Esophagus muscularis mucosa (tissue), 4 donors: ENCODE measurements at regions of chr6 and their contacts with region 1.

Region 1: DNA sequence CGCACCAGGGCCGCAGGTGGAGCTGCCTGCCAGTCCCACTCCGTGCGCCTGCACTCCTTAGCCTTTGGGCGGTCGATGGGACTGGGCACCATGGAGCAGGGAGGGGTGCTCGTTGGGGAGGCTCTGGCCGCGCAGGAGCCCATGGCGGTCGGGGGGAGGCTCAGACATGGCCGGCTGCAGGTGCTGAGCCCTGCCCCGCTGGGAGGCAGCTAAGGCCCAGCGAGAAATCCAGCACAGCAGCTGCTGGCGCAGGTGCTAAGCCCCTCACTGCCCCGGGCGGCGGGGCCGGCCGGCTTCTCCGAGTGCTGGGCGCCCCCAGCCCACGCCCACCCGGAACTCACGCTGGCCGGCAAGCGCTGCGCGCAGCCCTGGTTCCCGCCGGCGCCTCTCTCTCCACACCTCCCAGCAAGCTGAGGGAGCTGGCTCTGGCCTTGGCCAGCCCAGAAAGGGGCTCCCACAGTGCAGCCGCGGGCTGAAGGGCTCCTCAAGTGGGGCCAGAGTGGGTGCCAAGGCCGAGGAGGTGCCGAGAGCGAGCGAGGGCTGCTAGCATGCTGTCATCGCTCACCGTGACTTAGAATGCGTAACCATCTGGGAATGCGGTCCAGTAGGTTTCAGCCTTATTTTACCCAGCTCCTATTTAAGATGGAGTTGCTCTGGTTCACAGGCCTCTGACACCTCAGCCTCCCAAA is 77.3 kb downstream of the C6orf52 start:
- DNase-seq: no peak
- H3K4me3 ChIP-seq: no peak overlapping the region
- H3K27ac ChIP-seq: peak overlapping the region in 3 of 4 donors; percentile 34 to 80 (median 75)
- H3K4me1 ChIP-seq: peaks cover 10 to 79% (median 70%) of the 10 kb centered on the region in 4 donors
- H3K27me3 ChIP-seq: no peaks in the 10 kb centered on the region
- CTCF ChIP-seq: no peak
- EP300 ChIP-seq: no peak
- POLR2A ChIP-seq: no peak

Region 2: GRCh38 chr6:10510592-10511367 is 106.4 kb before region 1 on chr6:
- intact Hi-C with region 1: loop called (anchors 5 kb)
- DNase-seq: no peak
- H3K4me3 ChIP-seq: peak overlapping the region; percentile 4 to 22 (median 20)
- H3K27ac ChIP-seq: peak overlapping the region; percentile 68 to 74 (median 70)
- H3K4me1 ChIP-seq: peaks cover 14 to 19% (median 18%) of the 10 kb centered on the region in 4 donors
- H3K27me3 ChIP-seq: no peaks in the 10 kb centered on the region
- CTCF ChIP-seq: peak; percentile 71 to 78 (median 74)
- EP300 ChIP-seq: no peak
- POLR2A ChIP-seq: no peak

Region 3: DNA sequence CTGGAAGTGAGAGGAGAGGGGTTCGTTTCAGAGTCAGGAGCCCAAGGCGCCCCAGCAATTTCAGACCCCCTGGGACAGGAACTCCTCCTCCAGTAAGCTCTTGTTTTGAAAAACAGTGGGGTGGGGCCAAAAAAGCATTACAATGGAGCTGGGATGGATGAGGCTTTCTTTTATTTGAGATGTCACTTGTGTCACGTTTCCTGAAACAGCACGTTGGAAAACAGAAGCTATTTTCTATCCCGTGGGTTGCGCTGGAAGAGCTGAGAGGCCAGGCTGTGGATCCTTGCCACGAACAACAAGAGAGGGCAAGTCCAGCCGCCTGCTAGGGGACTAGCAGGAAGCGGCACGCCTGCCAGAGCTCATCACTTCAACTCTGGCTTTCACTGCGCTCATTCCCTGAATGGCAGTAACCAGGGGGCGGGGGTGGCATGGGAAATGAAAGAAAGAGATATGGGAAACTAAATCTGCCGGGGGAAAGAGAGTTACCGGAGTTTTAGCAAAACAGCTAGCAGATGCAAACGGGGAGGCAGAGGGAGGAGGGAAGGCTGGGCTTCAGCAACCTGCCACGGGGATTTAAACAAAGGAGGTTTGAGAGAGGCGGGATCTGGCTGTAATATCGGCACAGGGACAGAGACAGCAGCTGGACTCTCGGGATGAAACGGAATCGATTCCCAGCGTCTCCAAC is 61.4 kb before region 1 on chr6:
- intact Hi-C with region 1: no loop called
- DNase-seq: peak; percentile 94
- H3K4me3 ChIP-seq: peak overlapping the region; percentile 50 to 59 (median 56)
- H3K27ac ChIP-seq: peak overlapping the region; percentile 80 to 85 (median 82)
- H3K4me1 ChIP-seq: peaks cover 29 to 63% (median 62%) of the 10 kb centered on the region in 4 donors
- H3K27me3 ChIP-seq: no peaks in the 10 kb centered on the region
- CTCF ChIP-seq: no peak
- EP300 ChIP-seq: no peak
- POLR2A ChIP-seq: no peak

Region 4: DNA sequence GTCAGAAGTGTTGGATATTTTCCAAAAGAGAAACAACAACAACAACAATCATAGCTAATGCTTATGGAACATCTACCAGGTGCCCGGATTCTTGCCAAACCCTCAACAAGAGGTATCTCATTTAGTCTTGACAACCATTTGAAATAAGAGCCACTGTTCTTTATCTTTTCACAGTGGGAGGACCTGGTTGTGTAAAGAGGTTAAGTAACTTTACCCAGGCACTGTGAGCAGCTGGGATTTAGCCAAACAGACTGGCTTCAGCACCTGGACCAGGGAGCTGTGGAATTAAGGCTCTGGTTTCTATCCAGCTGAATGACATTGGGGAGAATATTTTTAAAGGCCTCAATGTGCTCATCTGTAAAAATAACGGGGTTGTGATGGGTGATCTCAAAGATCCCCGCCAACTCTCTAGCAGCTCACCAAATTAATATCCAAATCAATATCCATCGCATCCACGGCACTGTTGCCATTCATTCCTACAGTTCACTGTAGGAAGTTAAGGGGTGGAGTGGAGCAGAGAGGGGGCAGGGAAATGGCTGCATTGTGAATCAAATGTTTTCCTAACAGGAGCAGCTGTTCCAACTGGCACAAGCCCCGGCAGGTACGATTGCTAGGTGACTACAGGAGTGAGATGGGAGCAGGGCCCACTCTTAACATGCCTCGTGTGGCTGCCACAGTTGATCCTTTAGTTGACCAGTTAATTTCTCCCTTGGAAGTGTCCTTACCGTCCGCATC is 34.2 kb before region 1 on chr6:
- intact Hi-C with region 1: no loop called
- DNase-seq: no peak
- H3K4me3 ChIP-seq: no peak overlapping the region
- H3K27ac ChIP-seq: peak overlapping the region in 1 of 4 donors; percentile 3
- H3K4me1 ChIP-seq: peaks cover 12 to 74% (median 65%) of the 10 kb centered on the region in 4 donors
- H3K27me3 ChIP-seq: no peaks in the 10 kb centered on the region
- CTCF ChIP-seq: no peak
- EP300 ChIP-seq: no peak
- POLR2A ChIP-seq: no peak